Left colon (tissue), 2 donors: ENCODE measurements at regions of chr15 and their contacts with region 1.

Region 1: DNA sequence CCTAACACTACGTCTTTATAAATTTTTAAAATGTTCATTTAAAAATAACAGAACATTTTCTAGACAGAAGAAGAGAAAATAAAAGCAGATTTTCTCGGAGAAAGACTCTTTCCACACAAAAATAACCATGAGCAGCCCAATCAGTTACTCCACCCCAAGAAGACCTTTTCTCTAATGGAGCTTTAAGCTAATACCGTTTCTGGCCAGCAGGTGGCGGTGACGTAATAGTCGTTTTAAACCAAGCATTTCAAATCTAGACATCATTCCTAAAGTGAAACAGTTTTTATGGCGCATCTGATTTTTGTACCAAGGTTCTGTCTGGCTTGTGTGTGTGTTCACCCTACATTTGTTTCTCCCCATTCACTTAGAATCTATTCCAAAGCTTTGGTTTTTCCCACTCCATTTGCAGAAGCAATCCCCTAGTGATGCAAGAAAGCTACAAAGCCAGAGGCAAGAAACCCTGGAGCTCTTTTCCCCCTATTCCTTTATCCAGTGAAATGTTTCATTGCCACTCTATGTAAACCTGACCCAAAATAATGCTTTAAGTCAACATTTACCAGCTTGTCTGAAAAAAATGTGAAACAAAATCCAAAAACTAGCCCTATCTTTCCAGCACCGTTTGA is 336.7 kb upstream of the IGF1R start:
- DNase-seq: peak; percentile 49 to 87
- ATAC-seq: no peak

Region 2: DNA sequence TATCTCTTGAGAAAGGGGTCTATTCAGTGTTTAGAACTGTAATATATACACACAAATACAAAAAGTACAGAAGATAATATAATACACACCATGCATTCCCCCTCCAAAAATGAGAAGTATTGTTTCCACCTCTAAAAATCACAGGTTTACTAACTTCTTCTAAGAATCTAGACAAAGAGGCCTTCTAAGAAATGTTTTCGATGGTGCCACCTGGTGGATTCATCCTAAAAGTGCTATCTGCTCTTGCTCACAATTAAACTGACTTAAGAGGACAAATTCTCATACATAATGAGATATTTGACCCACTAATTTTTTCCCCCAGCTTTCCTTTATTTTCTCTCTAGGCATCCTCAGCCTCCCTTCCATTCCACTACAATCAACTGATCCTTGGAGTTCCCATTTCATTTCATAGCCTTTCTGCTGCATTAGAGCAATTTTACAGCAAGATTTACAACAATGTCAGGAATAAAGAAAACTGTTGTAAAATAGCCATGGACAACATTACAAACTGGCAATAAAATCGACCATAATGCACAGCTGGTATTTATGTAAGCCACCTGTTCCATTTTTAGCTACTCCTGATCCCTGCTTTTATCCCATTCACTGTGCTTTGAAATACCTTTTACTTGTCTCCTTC is 226.6 kb before region 1 on chr15:
- intact Hi-C with region 1: no loop called
- DNase-seq: peak; percentile 29 to 34
- ATAC-seq: peak; percentile 54

Region 3: GRCh38 chr15:98421419-98422129 is 109.9 kb after region 1 on chr15:
- intact Hi-C with region 1: loop called in 1 of 2 experiments (anchors 5 kb)
- DNase-seq: peak in 1 of 2 donors; percentile 71
- ATAC-seq: peak; percentile 82

Region 4: GRCh38 chr15:98568382-98569017 is 256.8 kb after region 1 on chr15:
- intact Hi-C with region 1: no loop called
- DNase-seq: no peak
- ATAC-seq: no peak